Left ventricle myocardium inferior (tissue), 1 donor: ENCODE measurements at regions of chr19 and their contacts with region 1.

Region 1: DNA sequence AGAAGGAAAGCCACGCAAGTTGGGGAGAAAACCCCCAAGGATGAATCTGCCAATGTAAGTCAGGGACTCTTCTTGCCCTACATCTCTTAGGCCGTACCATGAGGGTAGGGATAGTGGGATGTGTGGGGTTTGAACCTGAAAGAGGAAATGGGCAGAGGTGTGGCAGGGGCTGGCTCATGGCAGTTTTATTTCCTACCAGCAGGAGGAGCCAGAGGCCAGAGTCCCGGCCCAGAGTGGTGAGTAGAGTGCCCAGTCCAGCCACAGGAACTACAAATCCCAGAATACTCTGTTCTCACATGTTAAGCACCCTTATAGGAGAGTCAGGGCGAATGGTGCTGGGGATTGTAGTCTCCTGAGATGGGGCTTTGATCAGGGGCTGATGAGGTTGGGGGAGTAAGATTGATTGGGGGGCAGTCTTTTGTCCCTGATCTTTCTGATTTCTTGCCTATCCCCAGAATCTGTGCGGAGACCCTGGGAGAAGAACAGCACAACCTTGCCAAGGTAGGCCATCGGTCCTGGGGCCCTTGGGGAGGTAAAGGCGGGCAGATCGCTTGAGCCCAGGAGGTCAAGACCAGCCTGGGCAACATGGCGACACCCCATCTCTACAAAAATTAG is 16.5 kb downstream of the VASP start:
- DNase-seq: peak; percentile 72
- H3K4me3 ChIP-seq: no peak overlapping the region
- H3K27ac ChIP-seq: peak overlapping the region; percentile 74
- H3K4me1 ChIP-seq: peaks cover 45% of the 10 kb centered on the region
- H3K27me3 ChIP-seq: no peaks in the 10 kb centered on the region
- CTCF ChIP-seq: peak; percentile 93

Region 2: GRCh38 chr19:45569619-45570421 is 46.1 kb after region 1 on chr19:
- intact Hi-C with region 1: loop called (anchors 10 kb)
- DNase-seq: peak; percentile 62
- H3K4me3 ChIP-seq: no peak overlapping the region
- H3K27ac ChIP-seq: peak overlapping the region; percentile 83
- H3K4me1 ChIP-seq: peaks cover 58% of the 10 kb centered on the region
- H3K27me3 ChIP-seq: no peaks in the 10 kb centered on the region
- CTCF ChIP-seq: peak; percentile 85

Region 3: GRCh38 chr19:45591004-45591637 is 67.4 kb after region 1 on chr19:
- intact Hi-C with region 1: no loop called
- DNase-seq: no peak
- H3K4me3 ChIP-seq: no peak overlapping the region
- H3K27ac ChIP-seq: no peak overlapping the region
- H3K4me1 ChIP-seq: peaks cover 29% of the 10 kb centered on the region
- H3K27me3 ChIP-seq: peaks cover 48% of the 10 kb centered on the region
- CTCF ChIP-seq: no peak

Region 4: GRCh38 chr19:45643024-45643926 is 119.5 kb after region 1 on chr19:
- intact Hi-C with region 1: loop called (anchors 10 kb)
- DNase-seq: peak; percentile 85
- H3K4me3 ChIP-seq: peak overlapping the region; percentile 67
- H3K27ac ChIP-seq: peak overlapping the region; percentile 91
- H3K4me1 ChIP-seq: peaks cover 63% of the 10 kb centered on the region
- H3K27me3 ChIP-seq: peaks cover 7% of the 10 kb centered on the region
- CTCF ChIP-seq: peak; percentile 98